ENCODE measurements at regions of chr2 and their contacts with region 1.

Region 1: GRCh38 chr2:239035361-239036078 is 187.6 kb downstream of the TWIST2 start:
- DNase-seq: peak in 1 of 2 experiments; percentile 88
- ATAC-seq: peak; percentile 85 to 95
- H3K4me3 ChIP-seq: no peak overlapping the region
- H3K27ac ChIP-seq: peak overlapping the region; percentile 41 to 85; a peak in 4 of 6 replicates
- H3K4me1 ChIP-seq: 0 out of 3 replicates have a peak, but pooled peaks cover 3% of the 10 kb centered on the region
- CTCF ChIP-seq: peak; percentile 76
- EP300 ChIP-seq: no peak
- POLR2A ChIP-seq: no peak
- RAD21 ChIP-seq: peak; percentile 69 to 84

Region 2: GRCh38 chr2:239106314-239106908 is 70.9 kb after region 1 on chr2:
- CTCF ChIA-PET with region 1: interaction called, 16 read pairs
- POLR2A ChIA-PET with region 1: no interaction called
- DNase-seq: peak; percentile 72 to 73
- ATAC-seq: peak; percentile 80 to 92
- H3K4me3 ChIP-seq: no peak overlapping the region
- H3K27ac ChIP-seq: 0 out of 6 replicates have a peak overlapping the region, but pooled peaks of 1 of the 2 experiments have one; percentile 37
- H3K4me1 ChIP-seq: peaks cover 5% of the 10 kb centered on the region; the same call in 1 of the 3 replicates
- CTCF ChIP-seq: peak; percentile 76
- EP300 ChIP-seq: no peak
- POLR2A ChIP-seq: no peak
- RAD21 ChIP-seq: peak; percentile 85 to 91

Measured in A549 (cell line).